CD8-positive, alpha-beta T cell (primary cell): ENCODE measurements at regions of chr19 and their contacts with region 1.

Region 1: DNA sequence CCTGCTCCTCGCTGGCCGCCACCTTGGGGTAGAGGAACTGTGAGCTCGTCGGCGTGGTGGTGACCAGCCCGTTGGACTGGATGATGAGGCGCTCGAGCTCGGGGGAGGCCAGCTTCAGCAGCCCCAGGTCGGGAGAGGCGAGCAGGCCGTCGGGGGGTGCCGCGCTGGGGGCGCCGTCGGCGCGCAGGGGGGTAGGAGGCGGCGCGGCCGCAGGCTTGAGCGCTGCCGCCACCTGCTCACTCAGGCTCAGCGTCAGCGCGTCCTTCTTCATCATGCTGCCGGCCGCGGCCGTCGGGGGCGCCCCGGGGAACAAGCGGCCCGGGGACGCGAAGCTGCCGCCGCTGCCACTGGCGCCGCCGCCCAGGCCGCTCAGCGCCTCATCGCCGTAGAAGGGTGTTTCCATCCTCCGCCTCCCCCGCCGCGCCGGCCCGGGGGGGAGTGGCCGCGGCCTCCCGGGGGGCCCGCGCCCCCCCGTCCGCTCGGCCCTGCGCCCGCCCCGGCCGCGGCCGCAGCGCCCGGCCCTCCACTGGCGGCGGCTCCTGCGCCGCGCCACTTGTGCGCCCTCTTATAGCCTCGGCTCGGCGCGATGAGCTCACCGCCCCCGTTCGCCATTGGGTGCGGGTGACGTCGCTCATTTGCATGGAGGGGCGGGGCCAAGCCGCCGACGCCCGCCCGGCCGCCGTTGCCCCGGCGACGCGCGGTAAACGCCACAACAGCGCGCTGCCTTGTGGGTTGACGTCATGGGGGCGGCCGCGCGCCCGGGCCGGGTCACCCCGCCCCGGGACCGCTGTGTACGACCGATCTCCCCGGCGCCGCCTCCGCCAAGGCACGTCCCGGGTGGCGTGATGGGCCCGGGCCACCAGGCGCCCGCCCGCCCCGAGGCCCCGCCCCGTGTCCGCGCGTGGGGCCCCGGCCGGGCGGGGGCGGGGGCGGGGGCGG is at the start of gene JUND:
- DNase-seq: peak; percentile 95 to 100 (median 98)
- ATAC-seq: peak; percentile 63
- H3K4me3 ChIP-seq: peak within 1 kb of the TSS; percentile 97 to 98
- H3K4me3 Mint-ChIP-seq: peak within 1 kb of the TSS; percentile 97
- H3K27ac ChIP-seq: peak within 1 kb of the TSS; percentile 99 to 100
- H3K27ac Mint-ChIP-seq: peak within 1 kb of the TSS; percentile 98
- H3K4me1 ChIP-seq: peaks cover 39% of the 10 kb centered on the region
- H3K4me1 Mint-ChIP-seq: peaks cover 47% of the 10 kb centered on the region
- H3K27me3 ChIP-seq: no peaks in the 10 kb centered on the region
- H3K27me3 Mint-ChIP-seq: no peaks in the 10 kb centered on the region
- CTCF ChIP-seq: no peak
- total RNA-seq, gene JUND: 1,995 to 2,125 TPM

Region 2: GRCh38 chr19:18091217-18091608 is 190.1 kb before region 1 on chr19:
- CTCF ChIA-PET with region 1: interaction called, 3 read pairs
- POLR2A ChIA-PET with region 1: interaction called, 12 read pairs
- intact Hi-C with region 1: no loop called
- DNase-seq: peak; percentile 54 to 94 (median 82)
- ATAC-seq: peak; percentile 61
- H3K4me3 ChIP-seq: peak overlapping the region in 1 of 2 experiments; percentile 3
- H3K4me3 Mint-ChIP-seq: peak overlapping the region; percentile 56
- H3K27ac ChIP-seq: peak overlapping the region; percentile 54 to 97
- H3K27ac Mint-ChIP-seq: peak overlapping the region; percentile 97
- H3K4me1 ChIP-seq: peaks cover 68% of the 10 kb centered on the region
- H3K4me1 Mint-ChIP-seq: peaks cover 68% of the 10 kb centered on the region
- H3K27me3 ChIP-seq: no peaks in the 10 kb centered on the region
- H3K27me3 Mint-ChIP-seq: no peaks in the 10 kb centered on the region
- CTCF ChIP-seq: no peak

Region 3: GRCh38 chr19:18130498-18131242 is 150.7 kb before region 1 on chr19:
- CTCF ChIA-PET with region 1: no interaction called
- POLR2A ChIA-PET with region 1: no interaction called
- intact Hi-C with region 1: no loop called
- DNase-seq: no peak
- ATAC-seq: no peak
- H3K4me3 ChIP-seq: no peak overlapping the region
- H3K4me3 Mint-ChIP-seq: no peak overlapping the region
- H3K27ac ChIP-seq: no peak overlapping the region
- H3K27ac Mint-ChIP-seq: no peak overlapping the region
- H3K4me1 ChIP-seq: no peaks in the 10 kb centered on the region
- H3K4me1 Mint-ChIP-seq: no peaks in the 10 kb centered on the region
- H3K27me3 ChIP-seq: no peaks in the 10 kb centered on the region
- H3K27me3 Mint-ChIP-seq: no peaks in the 10 kb centered on the region
- CTCF ChIP-seq: no peak

Region 4: DNA sequence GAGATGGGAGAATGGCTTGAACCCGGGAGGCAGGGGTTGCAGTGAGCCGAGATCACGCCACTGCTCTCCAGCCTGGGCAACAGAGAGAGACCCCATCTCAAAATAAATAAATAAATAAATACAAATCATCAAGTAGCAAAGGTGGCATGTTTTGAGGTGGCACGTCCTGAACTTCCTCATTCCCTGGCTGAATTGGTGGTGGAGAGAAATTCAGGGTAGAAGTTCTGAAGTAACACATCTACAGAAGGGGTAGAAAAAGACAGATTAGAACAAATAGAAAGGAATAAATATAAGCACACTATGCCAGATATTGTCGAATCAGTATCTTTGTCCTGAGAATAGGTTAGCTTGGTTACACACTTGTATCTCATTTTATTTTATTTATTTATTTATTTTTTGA is 101.4 kb before region 1 on chr19:
- CTCF ChIA-PET with region 1: no interaction called
- POLR2A ChIA-PET with region 1: no interaction called
- intact Hi-C with region 1: no loop called
- DNase-seq: no peak
- ATAC-seq: no peak
- H3K4me3 ChIP-seq: no peak overlapping the region
- H3K4me3 Mint-ChIP-seq: no peak overlapping the region
- H3K27ac ChIP-seq: no peak overlapping the region
- H3K27ac Mint-ChIP-seq: no peak overlapping the region
- H3K4me1 ChIP-seq: no peaks in the 10 kb centered on the region
- H3K4me1 Mint-ChIP-seq: no peaks in the 10 kb centered on the region
- H3K27me3 ChIP-seq: peaks cover 0 to 4% of the 10 kb centered on the region in 2 experiments
- H3K27me3 Mint-ChIP-seq: no peaks in the 10 kb centered on the region
- CTCF ChIP-seq: no peak

Region 5: DNA sequence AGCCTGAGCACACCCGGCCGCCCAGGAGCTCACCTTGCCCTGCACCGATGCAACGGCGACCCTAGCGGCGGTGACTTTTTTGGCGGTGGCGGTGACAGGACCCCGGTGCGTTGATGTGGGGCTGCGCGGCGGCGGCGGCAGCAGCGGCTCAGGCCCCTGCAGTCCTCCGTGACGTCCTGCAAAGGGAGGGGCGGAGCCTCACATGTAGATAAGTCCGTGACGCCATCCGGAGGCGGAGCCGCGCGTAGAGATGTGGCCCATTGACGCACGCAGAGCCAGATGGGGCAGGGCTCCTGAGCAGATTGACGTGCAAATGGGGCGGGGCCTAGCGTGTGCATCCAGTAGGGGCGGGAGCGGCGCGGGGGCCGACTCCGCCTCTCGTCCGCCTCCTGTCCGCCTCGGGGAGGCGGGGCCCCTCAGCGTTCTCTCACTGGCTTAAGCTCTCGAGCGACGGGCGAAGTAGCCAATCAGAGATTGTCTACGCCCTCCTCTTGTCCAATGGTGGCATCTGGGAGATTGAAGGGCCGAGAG is 77.4 kb before region 1 on chr19 and contains the start of gene RAB3A:
- CTCF ChIA-PET with region 1: interaction called, 6 read pairs
- POLR2A ChIA-PET with region 1: interaction called, 7 read pairs
- intact Hi-C with region 1: loop called in 1 of 2 experiments (anchors 2 kb)
- DNase-seq: peak; percentile 98 to 100 (median 100)
- ATAC-seq: peak; percentile 90
- H3K4me3 ChIP-seq: peak within 1 kb of the TSS; percentile 60 to 91
- H3K4me3 Mint-ChIP-seq: peak within 1 kb of the TSS; percentile 96
- H3K27ac ChIP-seq: peak within 1 kb of the TSS; percentile 76 to 81
- H3K27ac Mint-ChIP-seq: peak within 1 kb of the TSS; percentile 96
- H3K4me1 ChIP-seq: peaks cover 17% of the 10 kb centered on the region
- H3K4me1 Mint-ChIP-seq: peaks cover 21% of the 10 kb centered on the region
- H3K27me3 ChIP-seq: no peaks in the 10 kb centered on the region
- H3K27me3 Mint-ChIP-seq: peaks cover 5% of the 10 kb centered on the region
- CTCF ChIP-seq: no peak
- total RNA-seq, gene RAB3A: 16.8 to 19.4 TPM

Region 6: GRCh38 chr19:18304458-18305310 is 23.3 kb after region 1 on chr19:
- CTCF ChIA-PET with region 1: interaction called, 256 read pairs
- POLR2A ChIA-PET with region 1: interaction called, 207 read pairs
- intact Hi-C with region 1: loop called (anchors 1 kb)
- DNase-seq: peak; percentile 69 to 93 (median 89)
- ATAC-seq: peak; percentile 77
- H3K4me3 ChIP-seq: peak overlapping the region; percentile 58 to 63
- H3K4me3 Mint-ChIP-seq: peak overlapping the region; percentile 97
- H3K27ac ChIP-seq: peak overlapping the region; percentile 91 to 94
- H3K27ac Mint-ChIP-seq: peak overlapping the region; percentile 100
- H3K4me1 ChIP-seq: peaks cover 64% of the 10 kb centered on the region
- H3K4me1 Mint-ChIP-seq: peaks cover 45% of the 10 kb centered on the region
- H3K27me3 ChIP-seq: no peaks in the 10 kb centered on the region
- H3K27me3 Mint-ChIP-seq: no peaks in the 10 kb centered on the region
- CTCF ChIP-seq: no peak

Region 7: GRCh38 chr19:18328340-18329034 is 47.1 kb after region 1 on chr19:
- CTCF ChIA-PET with region 1: interaction called, 318 read pairs
- POLR2A ChIA-PET with region 1: interaction called, 267 read pairs
- intact Hi-C with region 1: loop called (anchors 1 kb)
- DNase-seq: peak; percentile 75 to 94 (median 84)
- ATAC-seq: peak; percentile 99
- H3K4me3 ChIP-seq: peak overlapping the region; percentile 17 to 25
- H3K4me3 Mint-ChIP-seq: peak overlapping the region; percentile 62
- H3K27ac ChIP-seq: peak overlapping the region in 1 of 2 experiments; percentile 31
- H3K27ac Mint-ChIP-seq: peak overlapping the region; percentile 2
- H3K4me1 ChIP-seq: peaks cover 14% of the 10 kb centered on the region
- H3K4me1 Mint-ChIP-seq: peaks cover 13% of the 10 kb centered on the region
- H3K27me3 ChIP-seq: no peaks in the 10 kb centered on the region
- H3K27me3 Mint-ChIP-seq: no peaks in the 10 kb centered on the region
- CTCF ChIP-seq: peak; percentile 85

Region 8: DNA sequence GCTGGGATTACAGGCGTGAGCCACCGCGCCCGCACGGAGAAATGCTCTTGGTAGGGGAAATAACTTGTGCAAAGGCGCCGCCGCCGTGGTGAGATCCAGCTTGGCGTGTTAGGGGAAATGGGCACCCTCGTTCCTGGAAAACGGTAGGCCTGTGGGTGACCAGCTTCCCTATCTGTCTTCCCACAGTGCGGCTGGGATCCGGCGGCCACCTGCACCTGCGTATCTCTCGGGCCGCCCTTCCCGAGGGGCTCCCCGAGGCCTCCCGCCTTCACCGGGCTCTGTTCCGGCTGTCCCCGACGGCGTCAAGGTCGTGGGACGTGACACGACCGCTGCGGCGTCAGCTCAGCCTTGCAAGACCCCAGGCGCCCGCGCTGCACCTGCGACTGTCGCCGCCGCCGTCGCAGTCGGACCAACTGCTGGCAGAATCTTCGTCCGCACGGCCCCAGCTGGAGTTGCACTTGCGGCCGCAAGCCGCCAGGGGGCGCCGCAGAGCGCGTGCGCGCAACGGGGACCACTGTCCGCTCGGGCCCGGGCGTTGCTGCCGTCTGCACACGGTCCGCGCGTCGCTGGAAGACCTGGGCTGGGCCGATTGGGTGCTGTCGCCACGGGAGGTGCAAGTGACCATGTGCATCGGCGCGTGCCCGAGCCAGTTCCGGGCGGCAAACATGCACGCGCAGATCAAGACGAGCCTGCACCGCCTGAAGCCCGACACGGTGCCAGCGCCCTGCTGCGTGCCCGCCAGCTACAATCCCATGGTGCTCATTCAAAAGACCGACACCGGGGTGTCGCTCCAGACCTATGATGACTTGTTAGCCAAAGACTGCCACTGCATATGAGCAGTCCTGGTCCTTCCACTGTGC is 107.0 kb after region 1 on chr19:
- CTCF ChIA-PET with region 1: interaction called, 20 read pairs
- POLR2A ChIA-PET with region 1: interaction called, 4 read pairs
- intact Hi-C with region 1: no loop called
- DNase-seq: peak; percentile 58 to 89 (median 76)
- ATAC-seq: peak; percentile 93
- H3K4me3 ChIP-seq: peak overlapping the region; percentile 38 to 43
- H3K4me3 Mint-ChIP-seq: peak overlapping the region; percentile 77
- H3K27ac ChIP-seq: no peak overlapping the region
- H3K27ac Mint-ChIP-seq: no peak overlapping the region
- H3K4me1 ChIP-seq: peaks cover 8% of the 10 kb centered on the region
- H3K4me1 Mint-ChIP-seq: peaks cover 8% of the 10 kb centered on the region
- H3K27me3 ChIP-seq: peaks cover 20 to 21% of the 10 kb centered on the region in 2 experiments
- H3K27me3 Mint-ChIP-seq: peaks cover 24% of the 10 kb centered on the region
- CTCF ChIP-seq: peak; percentile 99

Region 9: GRCh38 chr19:18588611-18589379 is 307.4 kb after region 1 on chr19 and contains the start of gene REX1BD:
- CTCF ChIA-PET with region 1: no interaction called
- POLR2A ChIA-PET with region 1: interaction called, 10 read pairs
- intact Hi-C with region 1: loop called in 1 of 2 experiments (anchors 5 kb)
- DNase-seq: peak; percentile 71 to 94 (median 89)
- ATAC-seq: peak; percentile 81
- H3K4me3 ChIP-seq: peak within 1 kb of the TSS; percentile 62 to 83
- H3K4me3 Mint-ChIP-seq: peak within 1 kb of the TSS; percentile 93
- H3K27ac ChIP-seq: peak within 1 kb of the TSS; percentile 83 to 86
- H3K27ac Mint-ChIP-seq: peak within 1 kb of the TSS; percentile 95
- H3K4me1 ChIP-seq: peaks cover 31% of the 10 kb centered on the region
- H3K4me1 Mint-ChIP-seq: peaks cover 34% of the 10 kb centered on the region
- H3K27me3 ChIP-seq: no peaks in the 10 kb centered on the region
- H3K27me3 Mint-ChIP-seq: no peaks in the 10 kb centered on the region
- CTCF ChIP-seq: peak; percentile 77
- total RNA-seq, gene REX1BD: 85.6 to 91.1 TPM

Region 10: DNA sequence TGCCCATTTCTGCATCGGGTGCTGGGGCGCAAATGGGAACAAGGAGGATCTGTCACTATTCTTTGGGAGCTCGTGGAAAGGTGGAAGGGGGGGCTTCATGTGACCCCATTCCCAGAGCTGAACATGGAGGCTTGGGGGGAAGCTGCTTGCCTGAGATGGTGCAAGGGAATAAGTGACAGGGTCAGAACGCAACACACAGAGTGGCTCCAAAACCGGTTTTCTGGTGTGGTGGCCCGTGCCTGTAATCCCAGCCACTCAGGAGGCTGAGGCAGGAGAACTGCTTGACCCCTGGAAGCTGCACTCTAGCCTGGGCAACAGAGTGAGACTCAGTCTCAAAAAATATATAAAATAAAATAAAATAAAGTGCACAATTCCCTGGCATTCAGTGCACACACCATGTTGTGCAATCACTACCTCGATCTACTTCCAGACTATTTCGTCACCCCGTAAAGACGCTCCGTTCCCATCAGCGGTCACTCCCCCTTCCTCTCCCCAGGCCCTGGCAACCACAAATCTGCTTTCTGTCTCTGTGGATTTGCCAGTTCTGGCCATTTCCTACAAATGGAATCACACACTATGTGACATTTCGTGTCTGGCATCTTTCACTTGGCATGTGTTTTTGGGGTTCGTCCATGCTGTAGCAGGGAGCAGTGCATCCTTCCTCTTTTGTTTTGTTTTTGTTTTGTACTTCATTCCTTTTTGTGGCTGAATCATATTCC is 528.0 kb after region 1 on chr19:
- CTCF ChIA-PET with region 1: no interaction called
- POLR2A ChIA-PET with region 1: no interaction called
- intact Hi-C with region 1: no loop called
- DNase-seq: no peak
- ATAC-seq: no peak
- H3K4me3 ChIP-seq: no peak overlapping the region
- H3K4me3 Mint-ChIP-seq: no peak overlapping the region
- H3K27ac ChIP-seq: no peak overlapping the region
- H3K27ac Mint-ChIP-seq: no peak overlapping the region
- H3K4me1 ChIP-seq: no peaks in the 10 kb centered on the region
- H3K4me1 Mint-ChIP-seq: peaks cover 3% of the 10 kb centered on the region
- H3K27me3 ChIP-seq: no peaks in the 10 kb centered on the region
- H3K27me3 Mint-ChIP-seq: peaks cover 9% of the 10 kb centered on the region
- CTCF ChIP-seq: no peak